HEK293 (cell line): ENCODE measurements at regions of chr19 and their contacts with region 1.

Region 1: DNA sequence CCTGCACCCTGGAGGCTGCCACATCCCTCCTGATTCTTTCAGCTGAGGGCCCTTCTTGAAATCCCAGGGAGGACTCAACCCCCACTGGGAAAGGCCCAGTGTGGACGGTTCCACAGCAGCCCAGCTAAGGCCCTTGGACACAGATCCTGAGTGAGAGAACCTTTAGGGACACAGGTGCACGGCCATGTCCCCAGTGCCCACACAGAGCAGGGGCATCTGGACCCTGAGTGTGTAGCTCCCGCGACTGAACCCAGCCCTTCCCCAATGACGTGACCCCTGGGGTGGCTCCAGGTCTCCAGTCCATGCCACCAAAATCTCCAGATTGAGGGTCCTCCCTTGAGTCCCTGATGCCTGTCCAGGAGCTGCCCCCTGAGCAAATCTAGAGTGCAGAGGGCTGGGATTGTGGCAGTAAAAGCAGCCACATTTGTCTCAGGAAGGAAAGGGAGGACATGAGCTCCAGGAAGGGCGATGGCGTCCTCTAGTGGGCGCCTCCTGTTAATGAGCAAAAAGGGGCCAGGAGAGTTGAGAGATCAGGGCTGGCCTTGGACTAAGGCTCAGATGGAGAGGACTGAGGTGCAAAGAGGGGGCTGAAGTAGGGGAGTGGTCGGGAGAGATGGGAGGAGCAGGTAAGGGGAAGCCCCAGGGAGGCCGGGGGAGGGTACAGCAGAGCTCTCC is 6.9 kb upstream of the CEACAM5 start:
- H3K4me3 ChIP-seq: no peak overlapping the region
- H3K27ac ChIP-seq: no peak overlapping the region
- H3K4me1 ChIP-seq: peaks cover 3% of the 10 kb centered on the region; the same call in 1 of the 2 replicates
- CTCF ChIP-seq: peak; percentile 62

Region 2: DNA sequence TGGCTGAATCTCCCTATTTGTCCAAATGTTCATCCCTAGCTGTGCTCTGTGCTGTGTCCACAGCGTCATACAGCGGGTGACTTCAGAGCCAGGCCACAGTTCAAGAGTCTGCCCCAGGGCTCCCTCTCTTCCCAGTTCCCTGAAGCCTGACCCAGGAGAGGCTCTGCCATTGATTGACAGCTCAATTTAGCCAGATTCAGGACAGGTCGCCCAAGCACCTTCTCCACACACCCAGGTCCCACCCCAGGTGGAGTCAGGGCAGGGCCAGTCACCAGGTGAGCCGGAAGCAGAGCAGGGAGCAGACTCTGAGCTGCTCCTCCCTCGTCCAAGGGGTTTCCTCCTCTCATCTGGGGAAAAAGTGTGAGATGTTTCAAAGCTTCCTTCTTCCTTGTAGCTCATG is 19.2 kb before region 1 on chr19:
- CTCF ChIA-PET with region 1: interaction called, 15 read pairs
- POLR2A ChIA-PET with region 1: no interaction called
- H3K4me3 ChIP-seq: no peak overlapping the region
- H3K27ac ChIP-seq: no peak overlapping the region
- H3K4me1 ChIP-seq: no peaks in the 10 kb centered on the region
- CTCF ChIP-seq: no peak